ENCODE measurements at regions of chr11 and their contacts with region 1.

Region 1: GRCh38 chr11:32583459-32584271 is at the start of gene EIF3M:
- DNase-seq: peak; percentile 91
- ATAC-seq: peak; percentile 98
- H3K4me3 ChIP-seq: peak within 1 kb of the TSS; percentile 66 to 99 (median 88)
- H3K27ac ChIP-seq: peak within 1 kb of the TSS; percentile 82
- H3K4me1 ChIP-seq: peaks cover 48% of the 10 kb centered on the region
- H3K27me3 ChIP-seq: no peaks in the 10 kb centered on the region; a peak in 1 of 5 replicates
- CTCF ChIP-seq: no peak
- EP300 ChIP-seq: no peak
- POLR2A ChIP-seq: peak; percentile 83 to 85
- RAD21 ChIP-seq: no peak; the same call in 1 of the 2 replicates
- total RNA-seq, gene EIF3M: 389 and 593 TPM in 2 replicates

Region 2: DNA sequence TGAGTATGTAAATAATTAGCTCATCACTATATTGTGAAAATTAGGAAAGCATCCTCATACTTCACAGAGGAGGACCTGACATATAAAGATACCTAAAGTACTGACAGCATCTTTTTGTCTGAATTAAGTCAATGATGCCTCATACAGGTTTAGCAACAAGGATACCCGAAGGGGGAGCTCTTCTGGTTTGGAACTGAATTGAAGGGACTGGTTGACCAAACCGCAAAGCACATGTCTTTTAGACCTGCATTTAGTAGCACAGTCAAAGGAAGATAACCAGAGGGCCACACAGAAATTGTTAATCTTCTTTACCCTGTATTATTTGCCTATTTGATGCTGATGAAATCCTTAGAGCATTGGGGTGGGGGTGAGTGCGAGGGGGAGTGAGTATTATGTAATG is 135.4 kb before region 1 on chr11:
- CTCF ChIA-PET with region 1: no interaction called
- POLR2A ChIA-PET with region 1: no interaction called
- in situ Hi-C with region 1: no loop called
- intact Hi-C with region 1: loop called (anchors 5 kb)
- DNase-seq: peak; percentile 31
- ATAC-seq: peak; percentile 69
- H3K4me3 ChIP-seq: no peak overlapping the region
- H3K27ac ChIP-seq: no peak overlapping the region
- H3K4me1 ChIP-seq: peaks cover 7% of the 10 kb centered on the region; the same call in 1 of the 2 replicates
- H3K27me3 ChIP-seq: peaks cover 0 to 2% of the 10 kb centered on the region in 2 experiments; a peak in 1 of 5 replicates
- CTCF ChIP-seq: 0 out of 2 replicates have a peak, but pooled peaks have one; percentile 13
- EP300 ChIP-seq: no peak
- POLR2A ChIP-seq: no peak
- RAD21 ChIP-seq: no peak